H1 (cell line): ENCODE measurements at regions of chr6 and their contacts with region 1.

Region 1: DNA sequence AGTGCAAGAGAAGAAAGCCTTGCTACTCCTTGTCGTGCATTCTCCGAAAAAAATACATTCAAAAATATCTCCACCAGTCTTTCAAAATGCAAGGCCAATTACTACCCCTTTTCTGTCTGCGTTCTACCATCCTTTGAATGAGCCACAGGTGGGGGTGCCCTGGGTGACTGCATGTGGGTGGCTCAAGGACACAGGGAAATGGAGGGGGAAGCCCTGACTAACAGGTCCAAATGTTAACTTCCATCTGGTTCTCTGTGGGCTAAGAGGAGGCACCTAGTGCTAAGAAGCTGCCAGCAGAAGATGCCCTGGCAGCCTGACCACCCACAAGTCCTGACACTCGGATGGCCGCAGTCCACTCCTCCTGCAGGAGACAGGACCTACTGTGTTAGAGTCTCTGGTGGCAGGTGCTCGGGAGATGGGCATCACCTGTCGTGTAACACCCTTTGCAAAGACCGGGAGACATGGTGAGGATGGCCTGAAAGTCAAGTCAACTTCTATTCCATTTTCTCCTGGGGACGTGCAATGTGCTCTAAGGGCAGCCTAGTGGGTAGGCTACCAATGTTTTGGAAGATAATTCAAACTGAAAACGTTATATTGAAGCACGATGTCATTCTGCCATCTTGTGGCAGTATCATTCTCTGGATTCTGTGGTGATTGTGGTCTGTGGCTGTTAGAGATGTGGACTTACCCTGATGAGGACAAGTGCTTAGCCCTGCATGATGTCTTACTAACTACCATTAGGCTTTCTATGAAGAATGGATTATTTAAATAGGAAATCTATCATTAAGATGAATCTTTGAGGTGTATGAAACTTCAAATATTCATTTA is 27.4 kb upstream of the IGF2R start:
- DNase-seq: no peak
- H3K4me3 ChIP-seq: no peak overlapping the region
- H3K27ac ChIP-seq: no peak overlapping the region
- H3K4me1 ChIP-seq: no peaks in the 10 kb centered on the region
- H3K27me3 ChIP-seq: no peaks in the 10 kb centered on the region
- CTCF ChIP-seq: peak in 2 of 3 experiments; percentile 51 to 60; a peak in 3 of 4 replicates
- EP300 ChIP-seq: no peak
- POLR2A ChIP-seq: no peak
- RAD21 ChIP-seq: peak; percentile 78 to 83

Region 2: DNA sequence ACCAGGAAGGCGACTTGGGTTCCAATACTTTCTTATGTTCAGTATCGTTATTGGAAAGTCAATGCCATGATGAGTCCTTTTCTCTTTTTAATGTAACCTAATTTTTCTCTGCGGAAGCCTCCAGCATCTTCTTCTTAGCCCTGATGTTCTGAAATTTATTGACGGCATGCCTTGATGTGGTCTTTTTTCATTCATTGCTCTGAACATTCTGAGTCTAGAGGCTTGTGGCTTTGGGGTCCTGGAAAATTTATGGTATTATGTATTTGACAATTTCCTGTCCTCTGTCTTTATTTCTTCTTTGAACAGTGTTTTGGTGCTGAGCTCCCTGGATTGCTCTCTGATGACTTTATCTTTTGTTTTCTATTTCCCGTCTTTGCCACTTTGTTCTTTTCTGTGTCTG is 79.4 kb before region 1 on chr6:
- CTCF ChIA-PET with region 1: interaction called, 32 read pairs
- POLR2A ChIA-PET with region 1: no interaction called
- DNase-seq: no peak
- H3K4me3 ChIP-seq: no peak overlapping the region
- H3K27ac ChIP-seq: no peak overlapping the region
- H3K4me1 ChIP-seq: no peaks in the 10 kb centered on the region
- H3K27me3 ChIP-seq: no peaks in the 10 kb centered on the region
- CTCF ChIP-seq: no peak
- EP300 ChIP-seq: no peak
- POLR2A ChIP-seq: no peak
- RAD21 ChIP-seq: no peak

Region 3: DNA sequence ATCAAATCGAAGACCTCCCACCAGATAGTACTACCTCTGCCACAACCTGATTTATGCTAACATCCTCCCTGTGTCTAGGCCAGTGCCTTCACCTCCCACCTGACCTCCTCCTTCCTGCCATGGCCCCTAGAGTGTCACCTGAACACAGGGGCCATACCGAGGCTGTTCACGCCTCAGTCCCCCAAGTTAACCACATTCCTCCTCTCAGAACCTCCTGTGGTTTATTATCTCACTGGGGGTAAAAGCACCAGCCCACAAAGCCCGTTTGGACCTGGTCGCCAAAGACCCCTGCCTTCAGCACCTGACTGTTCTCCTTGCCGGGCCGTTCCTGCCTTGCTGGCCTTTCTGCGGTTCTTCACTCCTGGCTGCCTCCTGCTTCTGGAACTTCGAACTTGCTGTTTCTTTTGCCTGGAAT is 37.0 kb before region 1 on chr6:
- CTCF ChIA-PET with region 1: no interaction called
- POLR2A ChIA-PET with region 1: no interaction called
- DNase-seq: no peak
- H3K4me3 ChIP-seq: no peak overlapping the region
- H3K27ac ChIP-seq: no peak overlapping the region
- H3K4me1 ChIP-seq: no peaks in the 10 kb centered on the region; a peak in 1 of 7 replicates
- H3K27me3 ChIP-seq: 0 out of 7 replicates have a peak, but pooled peaks cover 0 to 2% (median 0%) of the 10 kb centered on the region in 4 experiments
- CTCF ChIP-seq: no peak
- EP300 ChIP-seq: no peak
- POLR2A ChIP-seq: no peak
- RAD21 ChIP-seq: no peak

Region 4: GRCh38 chr6:159951772-159952171 is 10.3 kb after region 1 on chr6:
- CTCF ChIA-PET with region 1: interaction called, 13 read pairs
- POLR2A ChIA-PET with region 1: no interaction called
- DNase-seq: no peak
- H3K4me3 ChIP-seq: no peak overlapping the region
- H3K27ac ChIP-seq: no peak overlapping the region
- H3K4me1 ChIP-seq: no peaks in the 10 kb centered on the region; a peak in 3 of 7 replicates
- H3K27me3 ChIP-seq: no peaks in the 10 kb centered on the region
- CTCF ChIP-seq: no peak
- EP300 ChIP-seq: no peak
- POLR2A ChIP-seq: no peak
- RAD21 ChIP-seq: no peak